HCT116 (cell line): ENCODE measurements at regions of chr3 and their contacts with region 1.

Region 1: GRCh38 chr3:107927361-107928083 is 163.3 kb downstream of the CD47 start:
- DNase-seq: peak; percentile 53
- ATAC-seq: peak; percentile 99
- H3K4me3 ChIP-seq: peak overlapping the region; percentile 51 to 62
- H3K27ac ChIP-seq: no peak overlapping the region
- H3K4me1 ChIP-seq: peaks cover 0 to 14% of the 10 kb centered on the region in 2 experiments; a peak in 2 of 4 replicates
- H3K27me3 ChIP-seq: no peaks in the 10 kb centered on the region
- CTCF ChIP-seq: peak; percentile 67 to 95 (median 93)
- POLR2A ChIP-seq: no peak
- RAD21 ChIP-seq: peak; percentile 70

Region 2: DNA sequence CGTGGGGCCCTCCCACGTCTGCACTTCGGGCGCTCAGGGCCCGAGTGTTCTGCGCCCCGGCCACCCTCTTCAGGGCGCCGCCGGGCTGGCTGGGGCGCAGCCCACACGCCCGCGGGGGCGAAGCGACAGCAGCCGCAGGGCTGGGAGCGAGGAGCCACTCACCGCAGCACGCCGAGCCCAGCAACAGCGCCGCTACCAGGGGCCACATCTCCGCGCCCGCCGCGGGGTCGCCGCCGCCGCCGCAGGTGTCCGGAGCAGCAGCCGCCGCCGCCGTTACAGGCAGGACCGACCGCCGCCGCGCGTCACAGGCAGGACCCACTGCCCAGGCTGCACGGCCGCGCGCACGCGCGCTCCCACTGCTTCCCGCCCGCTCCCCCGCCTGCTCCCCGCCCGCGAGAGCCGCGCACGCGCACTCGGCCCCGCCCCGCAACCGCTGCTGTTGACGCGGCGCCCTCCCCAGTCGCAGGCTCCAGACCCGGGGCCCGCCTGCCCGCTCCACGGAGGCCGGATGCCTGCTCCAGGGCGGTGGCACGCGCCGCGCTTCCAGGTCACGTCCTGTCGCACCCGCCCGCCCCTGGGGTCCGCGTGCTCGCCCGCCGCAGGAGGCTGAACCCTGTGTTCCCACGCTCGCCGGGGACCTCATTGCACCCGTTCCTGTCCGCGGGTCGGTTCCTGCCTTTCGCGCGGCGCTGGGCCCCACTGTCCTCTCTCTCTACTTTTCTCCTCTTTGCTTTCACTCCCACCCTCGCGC is 163.4 kb after region 1 on chr3 and contains the start of gene CD47:
- CTCF ChIA-PET with region 1: no interaction called
- POLR2A ChIA-PET with region 1: no interaction called
- RAD21 ChIA-PET with region 1: no interaction called
- intact Hi-C with region 1: loop called (anchors 5 kb)
- DNase-seq: peak; percentile 48
- ATAC-seq: peak; percentile 91
- H3K4me3 ChIP-seq: peak within 1 kb of the TSS; percentile 67 to 72
- H3K27ac ChIP-seq: peak within 1 kb of the TSS; percentile 57; the same call in 1 of the 2 replicates
- H3K4me1 ChIP-seq: peaks cover 0 to 19% of the 10 kb centered on the region in 2 experiments; a peak in 2 of 4 replicates
- H3K27me3 ChIP-seq: no peaks in the 10 kb centered on the region
- CTCF ChIP-seq: no peak
- POLR2A ChIP-seq: peak; percentile 49
- RAD21 ChIP-seq: no peak
- total RNA-seq, gene CD47: 42.5 TPM

Region 3: DNA sequence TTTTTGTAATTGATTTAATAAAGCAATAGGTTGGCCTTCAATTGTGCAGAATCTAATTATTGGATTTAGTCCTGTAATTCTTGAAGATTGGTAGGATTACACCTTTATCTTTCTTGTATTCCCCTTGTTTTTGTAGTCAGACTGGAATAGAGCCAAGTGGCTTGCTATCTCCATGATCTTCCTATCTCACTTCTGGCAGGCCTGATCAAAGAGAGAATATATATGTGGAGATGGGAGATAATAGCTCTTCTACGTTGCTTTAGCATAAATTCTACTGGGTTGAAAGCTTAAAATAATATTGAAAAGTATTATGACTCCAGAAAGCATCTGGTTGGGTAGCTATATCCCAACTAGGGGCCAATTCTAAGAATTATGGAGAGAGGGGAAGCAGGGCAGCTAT is 311.6 kb after region 1 on chr3:
- CTCF ChIA-PET with region 1: no interaction called
- POLR2A ChIA-PET with region 1: no interaction called
- RAD21 ChIA-PET with region 1: no interaction called
- intact Hi-C with region 1: no loop called
- DNase-seq: no peak
- ATAC-seq: no peak
- H3K4me3 ChIP-seq: no peak overlapping the region
- H3K27ac ChIP-seq: no peak overlapping the region
- H3K4me1 ChIP-seq: no peaks in the 10 kb centered on the region
- H3K27me3 ChIP-seq: no peaks in the 10 kb centered on the region
- CTCF ChIP-seq: no peak
- POLR2A ChIP-seq: no peak
- RAD21 ChIP-seq: no peak

Region 4: GRCh38 chr3:108271626-108272025 is 344.1 kb after region 1 on chr3:
- CTCF ChIA-PET with region 1: no interaction called
- POLR2A ChIA-PET with region 1: no interaction called
- RAD21 ChIA-PET with region 1: no interaction called
- intact Hi-C with region 1: no loop called
- DNase-seq: no peak
- ATAC-seq: no peak
- H3K4me3 ChIP-seq: no peak overlapping the region
- H3K27ac ChIP-seq: no peak overlapping the region
- H3K4me1 ChIP-seq: no peaks in the 10 kb centered on the region
- H3K27me3 ChIP-seq: no peaks in the 10 kb centered on the region
- CTCF ChIP-seq: no peak
- POLR2A ChIP-seq: no peak
- RAD21 ChIP-seq: no peak